BJ (cell line): ENCODE measurements at regions of chr13 and their contacts with region 1.

Region 1: GRCh38 chr13:99436686-99437416 is 64.4 kb upstream of the TM9SF2 start:
- DNase-seq: no peak
- H3K4me3 ChIP-seq: no peak overlapping the region
- H3K27me3 ChIP-seq: peaks cover 11% of the 10 kb centered on the region
- CTCF ChIP-seq: peak; percentile 100

Region 2: GRCh38 chr13:99176309-99177276 is 260.3 kb before region 1 on chr13:
- CTCF ChIA-PET with region 1: interaction called, 85 read pairs
- POLR2A ChIA-PET with region 1: no interaction called
- DNase-seq: no peak
- H3K4me3 ChIP-seq: no peak overlapping the region
- H3K27me3 ChIP-seq: peaks cover 4% of the 10 kb centered on the region
- CTCF ChIP-seq: peak; percentile 95

Region 3: GRCh38 chr13:99237981-99238662 is 198.7 kb before region 1 on chr13:
- CTCF ChIA-PET with region 1: no interaction called
- POLR2A ChIA-PET with region 1: no interaction called
- DNase-seq: no peak
- H3K4me3 ChIP-seq: no peak overlapping the region
- H3K27me3 ChIP-seq: no peaks in the 10 kb centered on the region
- CTCF ChIP-seq: no peak

Region 4: DNA sequence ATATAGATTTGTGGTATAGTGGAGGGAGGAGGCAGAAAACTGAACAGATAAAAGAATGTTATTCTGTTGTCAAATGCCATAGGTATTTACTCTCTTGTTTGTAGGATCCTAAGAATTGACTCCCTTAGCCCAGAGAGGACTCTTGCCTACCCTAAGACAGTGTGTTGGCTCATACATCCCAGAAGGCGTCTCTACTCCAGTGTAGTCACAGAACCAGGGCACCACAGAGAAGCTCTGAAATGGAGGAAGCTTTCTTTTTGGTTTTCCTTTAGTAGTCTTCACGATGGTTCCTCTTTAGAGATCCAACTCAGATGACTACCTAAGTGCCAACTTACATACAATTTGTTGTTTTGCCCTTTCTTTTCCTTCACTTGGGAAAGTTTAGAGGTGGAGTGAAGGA is 143.7 kb before region 1 on chr13:
- CTCF ChIA-PET with region 1: interaction called, 14 read pairs
- POLR2A ChIA-PET with region 1: no interaction called
- DNase-seq: no peak
- H3K4me3 ChIP-seq: no peak overlapping the region
- H3K27me3 ChIP-seq: no peaks in the 10 kb centered on the region
- CTCF ChIP-seq: no peak

Region 5: DNA sequence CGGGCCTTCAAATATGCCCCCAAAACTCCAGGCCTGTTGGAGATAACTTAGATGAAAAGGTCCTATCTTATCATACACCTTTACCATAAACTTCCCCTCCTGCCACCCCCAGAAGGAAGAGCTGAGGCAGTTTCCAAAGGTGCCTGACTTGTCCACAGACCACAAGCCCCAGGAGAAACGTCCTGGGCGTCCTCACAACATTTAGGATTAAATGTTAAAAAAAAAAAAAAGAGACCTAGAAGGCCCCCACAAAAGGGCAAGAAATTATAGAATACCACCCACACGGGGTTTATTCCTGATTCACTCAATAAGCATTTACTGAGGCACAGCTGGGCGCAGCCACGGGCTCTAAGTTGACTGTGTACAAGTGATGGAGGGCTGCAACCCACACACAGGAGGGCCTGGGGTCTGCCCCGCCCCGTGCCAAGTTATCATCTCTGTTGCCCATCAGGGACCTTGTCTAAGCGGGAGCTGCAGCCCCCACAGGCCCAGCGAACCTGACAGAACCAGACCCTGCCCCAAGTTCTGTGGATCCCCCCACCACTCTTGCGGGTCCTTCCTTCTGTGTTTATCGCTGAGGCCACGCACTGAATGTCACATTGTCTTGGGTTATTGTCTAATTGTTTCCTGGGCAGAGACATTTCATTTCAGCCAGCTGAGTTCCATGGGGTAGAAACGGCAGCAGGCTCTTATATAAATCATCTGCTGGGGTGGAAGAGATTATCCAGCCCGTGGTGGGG is 18.6 kb before region 1 on chr13:
- CTCF ChIA-PET with region 1: interaction called, 27 read pairs
- POLR2A ChIA-PET with region 1: no interaction called
- DNase-seq: no peak
- H3K4me3 ChIP-seq: no peak overlapping the region
- H3K27me3 ChIP-seq: peaks cover 29% of the 10 kb centered on the region
- CTCF ChIP-seq: no peak

Region 6: GRCh38 chr13:99448546-99448945 is 11.7 kb after region 1 on chr13:
- CTCF ChIA-PET with region 1: interaction called, 27 read pairs
- POLR2A ChIA-PET with region 1: no interaction called
- DNase-seq: no peak
- H3K4me3 ChIP-seq: no peak overlapping the region
- H3K27me3 ChIP-seq: no peaks in the 10 kb centered on the region
- CTCF ChIP-seq: no peak